ENCODE measurements at regions of chr18 and their contacts with region 1.

Region 1: GRCh38 chr18:46660955-46661749 is 4.1 kb upstream of the LOXHD1 start:
- DNase-seq: no peak
- H3K4me3 ChIP-seq: no peak overlapping the region
- H3K4me3 Mint-ChIP-seq: no peak overlapping the region
- H3K27ac ChIP-seq: no peak overlapping the region
- H3K27ac Mint-ChIP-seq: no peak overlapping the region
- H3K4me1 ChIP-seq: no peaks in the 10 kb centered on the region
- H3K4me1 Mint-ChIP-seq: no peaks in the 10 kb centered on the region
- H3K27me3 ChIP-seq: no peaks in the 10 kb centered on the region
- H3K27me3 Mint-ChIP-seq: peaks cover 3 to 8% (median 6%) of the 10 kb centered on the region in 3 donors
- CTCF ChIP-seq: no peak

Region 2: DNA sequence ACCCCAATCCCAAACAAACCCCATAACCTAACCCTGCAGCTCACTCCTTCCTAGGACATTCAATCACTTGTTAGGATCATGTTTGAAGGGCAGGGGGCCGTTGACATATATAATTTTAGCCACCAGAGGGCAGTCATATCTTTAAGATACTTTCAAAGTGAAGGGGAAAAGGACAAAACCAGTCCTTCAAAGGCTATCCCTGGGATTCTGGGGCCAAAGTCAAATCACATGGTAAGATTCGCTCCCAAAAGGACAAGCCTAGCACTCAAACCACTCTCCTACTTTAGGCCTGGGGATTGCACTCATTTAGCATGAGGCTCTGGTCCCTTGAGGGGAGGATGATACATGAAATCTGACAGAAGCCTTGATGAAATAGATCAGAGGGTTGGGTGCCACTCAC is 512.3 kb before region 1 on chr18:
- intact Hi-C with region 1: loop called (anchors 1 to 2 kb)
- DNase-seq: peak; percentile 18 to 49 (median 37)
- H3K4me3 ChIP-seq: no peak overlapping the region
- H3K4me3 Mint-ChIP-seq: no peak overlapping the region
- H3K27ac ChIP-seq: no peak overlapping the region
- H3K27ac Mint-ChIP-seq: peak overlapping the region in 1 of 7 donors; percentile 37
- H3K4me1 ChIP-seq: peaks cover 14 to 17% of the 10 kb centered on the region in 2 donors
- H3K4me1 Mint-ChIP-seq: peaks cover 14% of the 10 kb centered on the region
- H3K27me3 ChIP-seq: no peaks in the 10 kb centered on the region
- H3K27me3 Mint-ChIP-seq: no peaks in the 10 kb centered on the region
- CTCF ChIP-seq: peak; percentile 80

Region 3: GRCh38 chr18:46281185-46282176 is 379.7 kb before region 1 on chr18:
- intact Hi-C with region 1: loop called (anchors 1 to 2 kb)
- DNase-seq: peak; percentile 47 to 64 (median 57)
- H3K4me3 ChIP-seq: no peak overlapping the region
- H3K4me3 Mint-ChIP-seq: no peak overlapping the region
- H3K27ac ChIP-seq: no peak overlapping the region
- H3K27ac Mint-ChIP-seq: peak overlapping the region in 2 of 7 donors; percentile 23 to 28
- H3K4me1 ChIP-seq: no peaks in the 10 kb centered on the region
- H3K4me1 Mint-ChIP-seq: no peaks in the 10 kb centered on the region
- H3K27me3 ChIP-seq: no peaks in the 10 kb centered on the region
- H3K27me3 Mint-ChIP-seq: peaks cover 0 to 8% (median 2%) of the 10 kb centered on the region in 3 donors
- CTCF ChIP-seq: peak; percentile 95

Region 4: DNA sequence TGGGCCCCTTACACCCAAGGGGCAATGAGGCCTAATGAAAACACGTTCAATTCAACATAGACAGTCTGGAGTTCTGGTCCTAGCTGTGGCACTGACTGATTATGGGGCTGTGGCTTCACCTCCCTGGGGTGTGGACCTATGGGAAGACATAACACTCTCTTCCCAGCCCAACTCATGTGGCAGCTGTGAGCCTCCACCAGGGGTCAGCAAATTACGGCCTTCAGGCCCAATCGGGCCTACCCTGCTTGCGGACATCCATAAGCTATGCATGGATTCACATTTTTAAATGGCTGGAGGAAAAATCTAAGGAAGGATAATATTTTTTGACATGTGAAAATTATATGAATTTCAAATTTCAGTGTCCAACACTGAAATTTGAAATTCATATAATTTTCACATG is 105.4 kb before region 1 on chr18:
- intact Hi-C with region 1: loop called in 1 of 2 experiments (anchors 10 kb)
- DNase-seq: peak; percentile 7 to 27 (median 15)
- H3K4me3 ChIP-seq: no peak overlapping the region
- H3K4me3 Mint-ChIP-seq: no peak overlapping the region
- H3K27ac ChIP-seq: no peak overlapping the region
- H3K27ac Mint-ChIP-seq: no peak overlapping the region
- H3K4me1 ChIP-seq: no peaks in the 10 kb centered on the region
- H3K4me1 Mint-ChIP-seq: no peaks in the 10 kb centered on the region
- H3K27me3 ChIP-seq: no peaks in the 10 kb centered on the region
- H3K27me3 Mint-ChIP-seq: no peaks in the 10 kb centered on the region
- CTCF ChIP-seq: peak; percentile 19